Uterus (tissue), 4 donors: ENCODE measurements at regions of chr15 and their contacts with region 1.

Region 1: GRCh38 chr15:70810916-70811578 is 42.9 kb downstream of the LARP6 start:
- DNase-seq: no peak
- H3K4me3 ChIP-seq: no peak overlapping the region
- H3K27ac ChIP-seq: no peak overlapping the region
- H3K4me1 ChIP-seq: no peaks in the 10 kb centered on the region
- H3K27me3 ChIP-seq: no peaks in the 10 kb centered on the region
- CTCF ChIP-seq: no peak
- POLR2A ChIP-seq: no peak

Region 2: GRCh38 chr15:70679919-70680231 is 131.2 kb before region 1 on chr15:
- intact Hi-C with region 1: loop called (anchors 5 kb)
- DNase-seq: no peak
- H3K4me3 ChIP-seq: no peak overlapping the region
- H3K27ac ChIP-seq: peak overlapping the region in 1 of 2 donors; percentile 20
- H3K4me1 ChIP-seq: no peaks in the 10 kb centered on the region
- H3K27me3 ChIP-seq: no peaks in the 10 kb centered on the region
- CTCF ChIP-seq: no peak
- POLR2A ChIP-seq: no peak